HepG2 (cell line): ENCODE measurements at regions of chr1 and their contacts with region 1.

Region 1: GRCh38 chr1:15409388-15410222 is at the start of gene EFHD2:
- DNase-seq: peak; percentile 54
- ATAC-seq: peak; percentile 89
- H3K4me3 ChIP-seq: peak within 1 kb of the TSS; percentile 77 to 83 (median 78)
- H3K27ac ChIP-seq: no peak within 1 kb of the TSS
- H3K4me1 ChIP-seq: peaks cover 35% of the 10 kb centered on the region
- H3K27me3 ChIP-seq: peaks cover 3 to 38% of the 10 kb centered on the region in 2 experiments; a peak in 3 of 5 replicates
- CTCF ChIP-seq: peak; percentile 16; the same call in 1 of the 2 replicates
- EP300 ChIP-seq: no peak
- POLR2A ChIP-seq: peak in 1 of 2 experiments; percentile 76; a peak in 2 of 4 replicates
- RAD21 ChIP-seq: 0 out of 2 replicates have a peak, but pooled peaks have one; percentile 36
- total RNA-seq, gene EFHD2: 9.9 and 12.7 TPM in 2 replicates

Region 2: DNA sequence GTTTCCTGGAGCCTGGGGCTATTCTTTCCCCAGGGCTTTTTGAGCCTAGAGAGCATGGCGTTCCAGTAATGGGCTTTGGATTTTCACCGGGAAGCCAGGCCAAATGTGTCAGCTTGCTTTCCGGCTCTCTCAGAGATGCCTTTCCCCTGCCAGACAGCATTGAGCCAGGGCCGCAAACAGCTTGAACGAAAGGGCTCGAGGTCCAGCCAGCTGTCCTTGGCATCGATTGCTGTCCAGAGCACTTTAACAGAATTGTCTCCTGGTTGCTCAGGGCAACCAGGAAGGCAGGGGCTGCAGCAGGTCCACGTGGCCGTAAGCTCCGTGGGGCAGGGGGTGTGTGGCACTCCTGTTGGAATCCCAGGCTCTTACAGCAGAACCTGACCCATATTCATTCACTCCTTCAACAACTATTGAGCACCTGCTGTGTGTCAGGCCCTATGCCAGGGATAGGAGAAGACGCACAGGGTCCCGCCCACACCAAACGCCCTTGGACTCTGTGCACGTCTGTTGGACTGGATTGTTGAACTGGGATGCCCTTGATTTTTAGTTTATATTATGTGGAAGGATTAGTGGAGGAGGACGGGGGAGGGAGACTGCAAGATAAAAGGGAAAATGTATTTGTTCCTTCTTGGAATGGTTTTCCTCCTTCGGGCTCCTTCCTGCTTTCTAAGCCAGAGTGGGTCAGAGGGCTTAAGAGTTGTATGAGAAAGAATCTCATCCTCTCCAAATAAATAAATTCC is 38.7 kb before region 1 on chr1:
- CTCF ChIA-PET with region 1: no interaction called
- POLR2A ChIA-PET with region 1: no interaction called
- in situ Hi-C with region 1: no loop called
- intact Hi-C with region 1: loop called (anchors 5 kb)
- DNase-seq: peak; percentile 61
- ATAC-seq: peak; percentile 79
- H3K4me3 ChIP-seq: peak overlapping the region in 1 of 3 experiments; percentile 45; a peak in 2 of 6 replicates
- H3K27ac ChIP-seq: peak overlapping the region; percentile 65
- H3K4me1 ChIP-seq: peaks cover 69% of the 10 kb centered on the region
- H3K27me3 ChIP-seq: no peaks in the 10 kb centered on the region
- CTCF ChIP-seq: no peak
- EP300 ChIP-seq: 0 out of 4 replicates have a peak, but pooled peaks of 1 of the 2 experiments have one; percentile 6
- POLR2A ChIP-seq: no peak
- RAD21 ChIP-seq: no peak

Region 3: GRCh38 chr1:15703562-15703961 is 294.0 kb after region 1 on chr1:
- CTCF ChIA-PET with region 1: no interaction called
- POLR2A ChIA-PET with region 1: no interaction called
- in situ Hi-C with region 1: no loop called
- intact Hi-C with region 1: no loop called
- DNase-seq: no peak
- ATAC-seq: no peak
- H3K4me3 ChIP-seq: no peak overlapping the region
- H3K27ac ChIP-seq: no peak overlapping the region
- H3K4me1 ChIP-seq: no peaks in the 10 kb centered on the region
- H3K27me3 ChIP-seq: no peaks in the 10 kb centered on the region
- CTCF ChIP-seq: no peak
- EP300 ChIP-seq: no peak
- POLR2A ChIP-seq: no peak
- RAD21 ChIP-seq: no peak